K562 (cell line): ENCODE measurements at regions of chr1 and their contacts with region 1.

Region 1: DNA sequence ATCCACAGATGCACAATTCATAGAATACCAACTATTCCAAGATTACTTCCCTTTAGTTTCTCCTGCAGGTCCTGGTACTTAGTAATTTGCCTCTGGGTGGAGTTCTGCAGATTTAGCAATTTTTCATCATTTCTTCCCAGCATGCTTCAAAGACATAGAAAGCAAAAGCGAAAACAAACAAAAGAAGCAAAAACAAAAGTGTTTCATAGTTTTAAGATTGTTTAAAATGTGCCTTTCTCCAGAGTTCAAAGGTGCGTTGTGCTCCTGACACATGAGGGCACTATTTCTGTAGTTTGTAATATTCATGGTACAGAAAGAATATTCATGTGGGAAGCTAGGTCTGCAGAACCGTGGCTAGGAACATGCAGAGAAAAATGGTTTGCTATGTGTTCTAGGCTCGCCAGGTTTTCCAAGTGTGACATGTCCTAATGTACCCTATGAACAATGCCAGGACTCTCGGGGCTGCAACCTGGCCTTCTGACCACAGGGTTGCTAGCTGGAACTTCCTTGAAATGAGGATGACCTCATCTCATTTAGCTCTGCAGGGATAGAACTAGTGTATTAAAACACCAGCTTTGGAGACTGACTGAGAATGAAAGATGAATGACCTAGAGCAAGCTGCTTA is 30.0 kb upstream of the RCSD1 start:
- DNase-seq: peak; percentile 46 to 72 (median 57)
- ATAC-seq: peak; percentile 87
- H3K4me3 ChIP-seq: no peak overlapping the region
- H3K27ac ChIP-seq: 0 out of 3 replicates have a peak overlapping the region, but pooled peaks have one; percentile 19
- H3K4me1 ChIP-seq: peaks cover 13 to 22% of the 10 kb centered on the region in 2 experiments; a peak in 4 of 5 replicates
- H3K27me3 ChIP-seq: no peaks in the 10 kb centered on the region
- CTCF ChIP-seq: peak; percentile 61 to 91 (median 80)
- EP300 ChIP-seq: no peak; the same call in 1 of the 2 replicates
- POLR2A ChIP-seq: no peak
- RAD21 ChIP-seq: peak; percentile 93 to 97

Region 2: DNA sequence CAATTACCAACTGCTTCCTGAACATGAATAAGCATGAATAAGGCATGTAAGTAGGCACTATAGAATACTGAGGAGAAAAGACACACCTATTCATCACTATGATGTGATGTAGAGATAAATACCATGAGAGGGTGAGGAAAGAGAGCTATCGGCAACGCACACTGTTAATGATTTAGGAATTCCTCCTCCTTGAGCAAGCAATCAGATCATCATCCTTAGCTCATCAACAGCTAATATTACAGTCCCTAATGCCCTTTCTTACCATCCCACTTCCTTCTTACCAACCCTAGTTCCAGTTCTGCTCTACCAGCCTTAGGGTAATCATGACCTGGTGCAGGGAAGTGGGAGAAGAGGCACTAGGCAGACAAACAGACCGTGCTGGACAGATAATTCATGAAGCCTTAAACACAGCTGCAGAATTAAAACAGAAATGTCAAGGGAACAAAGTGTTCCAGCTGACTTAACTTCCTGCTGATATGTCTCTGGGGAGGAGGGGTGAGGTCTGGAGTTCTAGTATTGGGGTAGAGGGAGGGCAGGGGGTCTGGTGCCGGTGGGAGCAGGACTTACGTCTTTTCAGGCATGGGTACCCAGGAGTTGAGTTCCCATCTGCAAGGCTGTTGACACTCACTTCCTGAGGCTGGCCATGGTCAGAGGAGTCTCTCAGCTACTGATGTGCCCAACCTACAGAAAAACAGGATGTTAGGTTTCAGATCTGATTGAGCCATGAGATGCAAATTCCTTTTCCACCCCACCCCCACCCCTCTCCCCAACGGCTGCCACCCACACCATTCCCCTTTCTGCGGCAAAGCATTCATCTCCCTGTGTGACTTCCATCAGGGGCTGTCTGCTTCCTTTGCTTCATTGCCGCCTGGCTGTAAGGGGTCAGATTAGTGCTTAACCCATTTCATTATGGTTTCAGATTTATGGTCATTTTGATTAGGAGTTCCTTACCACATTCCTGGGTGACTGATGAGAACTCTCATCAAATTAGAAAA is 17.4 kb after region 1 on chr1:
- CTCF ChIA-PET with region 1: no interaction called
- POLR2A ChIA-PET with region 1: interaction called, 5 read pairs
- in situ Hi-C with region 1: no loop called
- intact Hi-C with region 1: loop called (anchors 1 kb)
- DNase-seq: peak; percentile 53 to 78 (median 68)
- ATAC-seq: peak; percentile 86
- H3K4me3 ChIP-seq: peak overlapping the region; percentile 23
- H3K27ac ChIP-seq: peak overlapping the region; percentile 81
- H3K4me1 ChIP-seq: peaks cover 16 to 40% of the 10 kb centered on the region in 2 experiments
- H3K27me3 ChIP-seq: no peaks in the 10 kb centered on the region
- CTCF ChIP-seq: no peak
- EP300 ChIP-seq: peak; percentile 84
- POLR2A ChIP-seq: peak; percentile 56
- RAD21 ChIP-seq: no peak; a peak in 1 of 4 replicates

Region 3: GRCh38 chr1:167635156-167635648 is 35.1 kb after region 1 on chr1:
- CTCF ChIA-PET with region 1: no interaction called
- POLR2A ChIA-PET with region 1: no interaction called
- in situ Hi-C with region 1: no loop called
- intact Hi-C with region 1: loop called (anchors 1 kb)
- DNase-seq: peak; percentile 64 to 93 (median 78)
- ATAC-seq: peak; percentile 82
- H3K4me3 ChIP-seq: peak overlapping the region; percentile 11; the same call in 1 of the 2 replicates
- H3K27ac ChIP-seq: peak overlapping the region; percentile 69
- H3K4me1 ChIP-seq: peaks cover 34 to 56% of the 10 kb centered on the region in 2 experiments
- H3K27me3 ChIP-seq: no peaks in the 10 kb centered on the region
- CTCF ChIP-seq: no peak
- EP300 ChIP-seq: 0 out of 2 replicates have a peak, but pooled peaks have one; percentile 28
- POLR2A ChIP-seq: peak; percentile 56; the same call in 1 of the 2 replicates
- RAD21 ChIP-seq: peak in 1 of 2 experiments; percentile 23; a peak in 1 of 4 replicates

Region 4: GRCh38 chr1:167697667-167698141 is 97.6 kb after region 1 on chr1:
- CTCF ChIA-PET with region 1: interaction called, 5 read pairs
- POLR2A ChIA-PET with region 1: no interaction called
- in situ Hi-C with region 1: loop called (anchors 5 kb)
- intact Hi-C with region 1: no loop called
- DNase-seq: no peak
- ATAC-seq: no peak
- H3K4me3 ChIP-seq: no peak overlapping the region
- H3K27ac ChIP-seq: no peak overlapping the region
- H3K4me1 ChIP-seq: no peaks in the 10 kb centered on the region; a peak in 1 of 5 replicates
- H3K27me3 ChIP-seq: no peaks in the 10 kb centered on the region
- CTCF ChIP-seq: no peak
- EP300 ChIP-seq: no peak
- POLR2A ChIP-seq: no peak
- RAD21 ChIP-seq: no peak

Region 5: GRCh38 chr1:167803358-167804207 is 203.5 kb after region 1 on chr1:
- CTCF ChIA-PET with region 1: no interaction called
- POLR2A ChIA-PET with region 1: no interaction called
- in situ Hi-C with region 1: no loop called
- intact Hi-C with region 1: loop called (anchors 1 kb)
- DNase-seq: peak; percentile 92 to 96 (median 94)
- ATAC-seq: peak; percentile 98
- H3K4me3 ChIP-seq: no peak overlapping the region
- H3K27ac ChIP-seq: no peak overlapping the region
- H3K4me1 ChIP-seq: peaks cover 0 to 7% of the 10 kb centered on the region in 2 experiments; a peak in 4 of 5 replicates
- H3K27me3 ChIP-seq: no peaks in the 10 kb centered on the region
- CTCF ChIP-seq: peak; percentile 98 to 100 (median 98)
- EP300 ChIP-seq: peak; percentile 8; the same call in 1 of the 2 replicates
- POLR2A ChIP-seq: no peak
- RAD21 ChIP-seq: peak; percentile 91 to 95

Region 6: DNA sequence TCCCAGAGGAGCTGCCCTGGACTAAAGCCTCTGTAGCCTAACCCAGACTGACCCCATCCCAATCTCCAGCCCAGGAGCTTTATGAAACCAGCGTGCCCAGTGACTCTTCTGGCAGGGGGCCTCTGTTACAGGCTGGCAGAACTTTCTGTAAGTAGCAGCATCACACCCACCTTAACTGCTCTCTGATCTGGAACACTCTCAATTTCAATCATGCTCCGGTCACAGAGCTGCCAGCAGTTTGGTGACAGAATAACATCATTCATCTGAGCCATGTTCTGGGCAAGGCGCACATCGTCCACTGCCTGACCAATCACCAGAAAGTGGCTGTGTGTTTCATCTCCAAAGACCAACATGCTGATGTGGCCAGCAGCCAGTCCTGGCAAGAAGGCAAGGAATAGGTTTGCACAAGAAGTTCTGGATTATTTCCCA is 299.2 kb after region 1 on chr1:
- CTCF ChIA-PET with region 1: no interaction called
- POLR2A ChIA-PET with region 1: no interaction called
- in situ Hi-C with region 1: no loop called
- intact Hi-C with region 1: no loop called
- DNase-seq: no peak
- ATAC-seq: 0 out of 3 replicates have a peak, but pooled peaks have one; percentile 11
- H3K4me3 ChIP-seq: no peak overlapping the region
- H3K27ac ChIP-seq: no peak overlapping the region
- H3K4me1 ChIP-seq: peaks cover 4 to 5% of the 10 kb centered on the region in 2 experiments; a peak in 3 of 5 replicates
- H3K27me3 ChIP-seq: no peaks in the 10 kb centered on the region
- CTCF ChIP-seq: no peak
- EP300 ChIP-seq: no peak
- POLR2A ChIP-seq: no peak
- RAD21 ChIP-seq: no peak

Region 7: DNA sequence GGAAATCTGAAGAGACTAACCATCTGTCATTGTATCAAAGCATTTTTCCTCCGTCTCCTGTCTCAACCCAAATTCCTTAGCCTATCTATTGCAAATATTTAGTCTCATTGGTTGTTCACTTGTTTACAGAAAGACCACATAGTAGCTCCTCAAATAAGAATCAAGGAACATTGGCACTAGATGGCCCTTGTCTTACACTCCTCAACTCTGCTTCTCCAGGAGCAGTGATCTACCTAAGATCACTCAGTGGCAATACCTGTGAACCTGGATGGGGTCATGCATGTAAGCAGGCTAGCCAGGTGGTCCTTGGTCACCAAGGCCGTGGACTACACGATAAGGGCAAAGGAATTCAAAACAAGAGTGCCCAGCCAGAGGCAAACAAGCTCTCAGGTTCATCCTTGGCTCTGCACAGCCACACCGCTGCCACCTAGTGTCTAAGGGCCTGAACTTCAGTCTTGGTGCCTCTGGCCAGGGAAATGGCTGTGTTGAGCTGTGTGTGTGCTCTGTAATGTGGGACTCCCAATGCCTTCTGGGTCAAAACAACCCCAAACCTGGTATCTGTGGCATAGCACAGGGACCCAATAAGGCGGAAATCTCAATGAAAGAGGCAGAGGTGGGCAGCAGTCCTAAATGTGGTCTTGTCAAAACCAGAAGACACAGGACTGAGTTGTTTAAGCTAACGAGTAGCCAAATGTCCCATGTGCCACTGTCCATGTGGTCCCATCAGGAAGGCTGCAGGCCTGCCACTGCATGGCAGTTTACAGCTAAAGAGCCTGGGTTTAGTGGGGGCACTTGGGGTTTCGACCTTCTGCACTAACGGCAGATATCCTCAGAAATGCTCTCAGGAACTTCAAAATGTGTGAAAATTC is 482.2 kb after region 1 on chr1:
- CTCF ChIA-PET with region 1: no interaction called
- POLR2A ChIA-PET with region 1: no interaction called
- in situ Hi-C with region 1: no loop called
- intact Hi-C with region 1: loop called (anchors 10 kb)
- DNase-seq: peak; percentile 78 to 87 (median 81)
- ATAC-seq: peak; percentile 92
- H3K4me3 ChIP-seq: no peak overlapping the region
- H3K27ac ChIP-seq: no peak overlapping the region; the same call in 2 of the 3 replicates
- H3K4me1 ChIP-seq: peaks cover 8 to 9% of the 10 kb centered on the region in 2 experiments; a peak in 4 of 5 replicates
- H3K27me3 ChIP-seq: no peaks in the 10 kb centered on the region
- CTCF ChIP-seq: peak; percentile 90 to 98 (median 96)
- EP300 ChIP-seq: no peak
- POLR2A ChIP-seq: no peak
- RAD21 ChIP-seq: peak; percentile 62 to 89